HAP-1 (cell line): ENCODE measurements at regions of chr5 and their contacts with region 1.

Region 1: GRCh38 chr5:128838623-128839022 is 126.7 kb upstream of the SLC27A6 start:
- DNase-seq: no peak
- H3K4me3 ChIP-seq: no peak overlapping the region
- H3K4me1 ChIP-seq: no peaks in the 10 kb centered on the region
- H3K27me3 ChIP-seq: no peaks in the 10 kb centered on the region

Region 2: DNA sequence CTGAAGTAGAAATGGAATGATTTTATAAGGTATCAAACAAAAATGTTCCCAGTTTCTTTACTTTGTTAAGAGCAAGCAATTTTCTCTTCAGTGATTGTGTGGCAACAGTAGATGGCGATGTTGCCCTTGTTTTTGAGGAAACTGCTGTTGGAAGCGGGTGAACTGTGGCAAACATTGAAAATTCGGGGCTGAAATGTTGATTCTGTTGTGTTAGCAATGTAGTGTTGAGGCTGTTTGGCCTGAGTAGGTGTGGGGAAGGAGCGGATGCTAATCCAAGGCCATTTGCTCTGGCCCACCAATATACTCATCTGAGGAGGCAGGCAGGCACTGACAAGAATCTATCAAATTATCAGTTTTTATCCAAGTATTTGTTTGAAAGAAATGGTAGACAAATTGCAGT is 625.3 kb before region 1 on chr5:
- in situ Hi-C with region 1: loop called (anchors 10 kb)
- DNase-seq: peak; percentile 56 to 75
- H3K4me3 ChIP-seq: no peak overlapping the region
- H3K4me1 ChIP-seq: no peaks in the 10 kb centered on the region
- H3K27me3 ChIP-seq: no peaks in the 10 kb centered on the region